ENCODE measurements at regions of chr3 and their contacts with region 1.

Region 1: DNA sequence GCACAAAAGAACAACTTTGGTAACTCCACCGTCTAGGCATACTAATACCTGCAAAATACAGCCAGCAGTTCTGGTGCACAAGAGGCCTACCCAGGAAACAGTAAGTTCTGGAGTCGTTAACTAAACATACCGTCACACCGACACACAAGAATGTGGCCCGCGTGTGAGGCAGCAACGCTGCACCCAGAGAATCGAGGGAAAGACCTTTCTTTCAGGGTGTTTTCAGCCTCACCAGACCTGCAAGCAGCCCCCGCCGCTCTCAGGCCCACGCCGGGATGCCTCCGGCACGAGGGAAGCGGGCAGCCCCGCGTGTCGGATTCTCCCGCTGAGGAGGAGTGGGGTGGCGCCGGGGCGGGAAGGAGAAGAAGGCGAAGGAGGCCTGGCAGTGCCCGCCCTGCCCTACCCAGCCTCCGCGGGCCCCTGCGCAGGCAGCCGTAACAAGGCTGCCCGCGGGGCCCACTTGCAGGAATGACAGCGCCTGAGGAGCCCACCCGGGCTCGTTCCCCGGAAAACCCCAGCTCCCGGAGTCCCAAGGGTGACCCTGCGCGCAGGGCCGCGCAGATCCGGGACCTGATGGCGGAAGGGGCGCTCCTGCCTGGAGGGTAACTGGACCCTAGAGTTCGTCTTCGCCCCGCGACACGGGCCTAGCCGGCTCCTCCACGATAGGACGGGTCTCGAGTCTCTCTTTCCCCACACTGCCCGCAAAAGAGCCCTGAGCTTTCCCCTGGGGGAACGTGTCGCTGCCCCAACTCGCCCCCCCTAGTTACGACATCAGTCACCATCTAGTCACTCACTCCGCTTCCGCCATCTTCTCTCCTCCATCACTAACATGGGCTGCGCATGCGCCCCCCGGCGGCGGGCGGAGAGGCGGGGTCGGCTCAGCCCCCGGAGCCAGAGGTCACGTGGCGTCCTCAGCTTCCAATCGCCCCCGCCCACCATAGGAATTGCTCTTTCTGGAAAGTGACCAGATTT is at the start of gene PHC3:
- DNase-seq: peak; percentile 97
- H3K4me3 Mint-ChIP-seq: peak within 1 kb of the TSS; percentile 98
- H3K27ac Mint-ChIP-seq: peak within 1 kb of the TSS; percentile 100
- H3K4me1 Mint-ChIP-seq: peaks cover 24% of the 10 kb centered on the region
- H3K27me3 Mint-ChIP-seq: no peaks in the 10 kb centered on the region
- total RNA-seq, gene PHC3: 54.7 and 56.4 TPM in 2 replicates

Region 2: GRCh38 chr3:169019021-169019420 is 1162.2 kb before region 1 on chr3:
- intact Hi-C with region 1: no loop called
- DNase-seq: no peak
- H3K4me3 Mint-ChIP-seq: no peak overlapping the region
- H3K27ac Mint-ChIP-seq: no peak overlapping the region
- H3K4me1 Mint-ChIP-seq: no peaks in the 10 kb centered on the region
- H3K27me3 Mint-ChIP-seq: no peaks in the 10 kb centered on the region

Region 3: DNA sequence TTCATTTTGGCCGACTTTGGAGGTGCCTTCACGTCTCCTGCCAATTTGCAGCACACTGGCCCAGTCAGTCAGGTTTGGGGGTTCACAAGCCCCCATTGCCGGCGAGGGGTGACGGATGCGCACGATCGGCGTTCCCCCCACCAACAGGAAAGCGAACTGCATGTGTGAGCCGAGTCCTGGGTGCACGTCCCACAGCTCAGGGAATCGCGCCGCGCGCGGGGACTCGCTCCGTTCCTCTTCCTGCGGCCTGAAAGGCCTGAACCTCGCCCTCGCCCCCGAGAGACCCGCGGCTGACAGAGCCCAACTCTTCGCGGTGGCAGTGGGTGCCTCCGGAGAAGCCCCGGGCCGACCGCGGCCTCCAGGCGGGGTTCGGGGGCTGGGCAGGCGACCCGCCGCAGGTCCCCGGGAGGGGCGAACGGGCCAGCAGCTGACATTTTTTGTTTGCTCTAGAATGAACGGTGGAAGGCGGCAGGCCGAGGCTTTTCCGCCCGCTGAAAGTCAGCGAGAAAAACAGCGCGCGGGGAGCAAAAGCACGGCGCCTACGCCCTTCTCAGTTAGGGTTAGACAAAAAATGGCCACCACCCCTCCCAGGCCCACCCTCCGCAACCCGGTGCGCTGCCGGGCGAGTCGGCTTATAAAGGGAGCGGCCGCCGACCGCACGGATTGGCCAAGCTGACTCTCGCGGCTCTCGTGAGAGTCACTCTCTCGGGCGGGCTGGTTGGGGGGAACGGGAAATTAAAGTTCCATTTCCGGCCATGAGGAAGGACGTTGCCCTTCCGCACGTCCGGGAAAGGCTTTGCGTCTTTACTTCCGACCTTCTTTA is 416.5 kb before region 1 on chr3 and contains the start of gene TERC:
- intact Hi-C with region 1: loop called (anchors 2 kb)
- DNase-seq: peak; percentile 96
- H3K4me3 Mint-ChIP-seq: peak within 1 kb of the TSS; percentile 96
- H3K27ac Mint-ChIP-seq: peak within 1 kb of the TSS; percentile 98
- H3K4me1 Mint-ChIP-seq: peaks cover 19% of the 10 kb centered on the region
- H3K27me3 Mint-ChIP-seq: no peaks in the 10 kb centered on the region
- total RNA-seq, gene TERC: 8.9 TPM in 1 of 2 replicates, not detected in the other

Region 4: DNA sequence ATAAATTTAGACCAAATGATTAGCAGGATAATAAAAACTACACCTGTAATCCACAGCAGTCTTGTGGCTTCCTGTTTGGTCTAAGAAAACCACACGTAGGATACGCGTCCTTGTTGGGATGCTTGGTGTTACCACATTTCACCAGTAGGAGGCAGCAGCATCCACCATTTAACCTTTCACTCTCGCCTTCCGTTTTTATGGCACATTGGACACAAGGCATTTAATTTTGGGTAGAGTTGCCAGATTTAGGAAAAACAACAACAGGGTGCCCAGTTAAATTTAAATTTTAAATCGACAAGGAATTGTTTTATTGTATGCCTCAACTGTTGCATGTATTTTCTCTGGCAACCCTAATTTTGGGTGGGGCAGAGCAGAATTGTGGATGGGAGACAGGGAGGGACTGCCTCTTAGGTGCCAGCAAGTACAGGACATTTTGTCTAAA is 317.7 kb before region 1 on chr3:
- intact Hi-C with region 1: loop called (anchors 5 kb)
- DNase-seq: peak; percentile 90
- H3K4me3 Mint-ChIP-seq: no peak overlapping the region
- H3K27ac Mint-ChIP-seq: no peak overlapping the region
- H3K4me1 Mint-ChIP-seq: peaks cover 16% of the 10 kb centered on the region
- H3K27me3 Mint-ChIP-seq: peaks cover 19% of the 10 kb centered on the region

Region 5: GRCh38 chr3:170055209-170055608 is 126.0 kb before region 1 on chr3:
- intact Hi-C with region 1: loop called (anchors 5 kb)
- DNase-seq: no peak
- H3K4me3 Mint-ChIP-seq: no peak overlapping the region
- H3K27ac Mint-ChIP-seq: no peak overlapping the region
- H3K4me1 Mint-ChIP-seq: peaks cover 29% of the 10 kb centered on the region
- H3K27me3 Mint-ChIP-seq: no peaks in the 10 kb centered on the region

Region 6: GRCh38 chr3:170211668-170212067 is 30.5 kb after region 1 on chr3:
- intact Hi-C with region 1: no loop called
- DNase-seq: no peak
- H3K4me3 Mint-ChIP-seq: no peak overlapping the region
- H3K27ac Mint-ChIP-seq: no peak overlapping the region
- H3K4me1 Mint-ChIP-seq: no peaks in the 10 kb centered on the region
- H3K27me3 Mint-ChIP-seq: peaks cover 6% of the 10 kb centered on the region

Region 7: DNA sequence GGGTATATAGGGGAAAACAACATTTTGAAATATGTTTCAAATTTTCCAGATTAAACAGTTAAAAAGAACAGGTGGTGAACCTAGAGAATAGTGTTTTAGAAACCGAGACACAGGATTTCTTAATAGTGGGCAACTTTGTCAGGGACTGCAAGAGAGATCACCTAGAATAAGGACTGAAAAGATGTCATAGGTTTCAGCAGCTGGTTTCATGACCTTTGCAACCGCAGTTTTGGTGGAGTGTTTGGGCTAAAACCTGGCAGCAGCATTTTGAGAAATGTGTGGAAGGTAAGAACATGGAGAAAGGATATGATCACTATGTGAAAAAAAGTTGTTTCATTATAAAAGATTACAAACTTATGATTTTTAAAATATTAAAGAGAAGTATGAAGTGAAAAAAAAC is 76.0 kb after region 1 on chr3:
- intact Hi-C with region 1: loop called (anchors 1 kb)
- DNase-seq: no peak
- H3K4me3 Mint-ChIP-seq: peak overlapping the region; percentile 24
- H3K27ac Mint-ChIP-seq: peak overlapping the region; percentile 83
- H3K4me1 Mint-ChIP-seq: peaks cover 40% of the 10 kb centered on the region
- H3K27me3 Mint-ChIP-seq: no peaks in the 10 kb centered on the region

Region 8: DNA sequence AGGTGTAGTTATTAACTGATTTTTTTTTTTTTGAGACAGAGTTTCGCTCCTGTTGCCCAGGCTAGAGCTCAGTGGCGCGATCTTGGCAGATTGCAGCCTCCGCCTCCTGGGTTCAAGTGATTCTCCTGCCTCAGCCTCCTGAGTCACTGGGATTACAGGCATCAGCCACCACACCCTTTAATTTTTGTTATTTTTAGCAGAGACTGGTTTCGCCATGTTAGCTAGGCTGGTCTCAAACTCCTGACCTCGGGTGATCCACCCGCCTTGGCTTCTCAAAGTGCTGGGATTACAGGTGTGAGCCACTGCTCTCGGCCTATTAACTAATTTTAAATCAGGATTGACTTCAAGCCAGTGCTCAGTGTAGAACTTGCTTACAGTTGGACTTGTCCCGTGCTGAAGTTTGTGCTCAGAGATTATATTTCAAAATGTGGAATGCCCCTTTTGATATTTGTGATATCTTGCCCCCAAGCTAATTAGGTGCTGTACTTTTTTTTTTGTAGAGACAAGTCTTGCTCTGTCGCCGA is 182.3 kb after region 1 on chr3:
- intact Hi-C with region 1: no loop called
- DNase-seq: peak; percentile 52
- H3K4me3 Mint-ChIP-seq: no peak overlapping the region
- H3K27ac Mint-ChIP-seq: no peak overlapping the region
- H3K4me1 Mint-ChIP-seq: peaks cover 26% of the 10 kb centered on the region
- H3K27me3 Mint-ChIP-seq: no peaks in the 10 kb centered on the region

Region 9: GRCh38 chr3:170622369-170623159 is 441.4 kb after region 1 on chr3:
- intact Hi-C with region 1: no loop called
- DNase-seq: no peak
- H3K4me3 Mint-ChIP-seq: no peak overlapping the region
- H3K27ac Mint-ChIP-seq: no peak overlapping the region
- H3K4me1 Mint-ChIP-seq: no peaks in the 10 kb centered on the region
- H3K27me3 Mint-ChIP-seq: peaks cover 11% of the 10 kb centered on the region

Region 10: GRCh38 chr3:170869645-170870593 is 688.7 kb after region 1 on chr3 and contains the start of gene RPL22L1:
- intact Hi-C with region 1: loop called (anchors 1 kb)
- DNase-seq: peak; percentile 98
- H3K4me3 Mint-ChIP-seq: peak within 1 kb of the TSS; percentile 92
- H3K27ac Mint-ChIP-seq: peak within 1 kb of the TSS; percentile 96
- H3K4me1 Mint-ChIP-seq: peaks cover 18% of the 10 kb centered on the region
- H3K27me3 Mint-ChIP-seq: no peaks in the 10 kb centered on the region
- total RNA-seq, gene RPL22L1: 157 TPM in 2 replicates